ENCODE measurements at regions of chr15 and their contacts with region 1.

Region 1: GRCh38 chr15:63288778-63289378 is 11.5 kb downstream of the APH1B start:
- DNase-seq: peak; percentile 80
- H3K4me3 ChIP-seq: no peak overlapping the region
- H3K27ac ChIP-seq: no peak overlapping the region
- H3K4me1 ChIP-seq: peaks cover 46% of the 10 kb centered on the region
- H3K27me3 ChIP-seq: no peaks in the 10 kb centered on the region
- CTCF ChIP-seq: peak; percentile 34 to 41
- POLR2A ChIP-seq: no peak

Region 2: GRCh38 chr15:62847900-62848489 is 440.9 kb before region 1 on chr15:
- CTCF ChIA-PET with region 1: interaction called, 3 read pairs
- POLR2A ChIA-PET with region 1: no interaction called
- dilution Hi-C with region 1: no loop called
- intact Hi-C with region 1: loop called (anchors 5 kb)
- DNase-seq: peak; percentile 65
- H3K4me3 ChIP-seq: no peak overlapping the region
- H3K27ac ChIP-seq: peak overlapping the region; percentile 44
- H3K4me1 ChIP-seq: peaks cover 39% of the 10 kb centered on the region
- H3K27me3 ChIP-seq: no peaks in the 10 kb centered on the region
- CTCF ChIP-seq: peak; percentile 57 to 73
- POLR2A ChIP-seq: no peak

Region 3: GRCh38 chr15:63093486-63094205 is 195.2 kb before region 1 on chr15:
- CTCF ChIA-PET with region 1: no interaction called
- POLR2A ChIA-PET with region 1: no interaction called
- dilution Hi-C with region 1: no loop called
- intact Hi-C with region 1: loop called (anchors 2 kb)
- DNase-seq: peak; percentile 73
- H3K4me3 ChIP-seq: no peak overlapping the region
- H3K27ac ChIP-seq: no peak overlapping the region
- H3K4me1 ChIP-seq: peaks cover 22% of the 10 kb centered on the region
- H3K27me3 ChIP-seq: no peaks in the 10 kb centered on the region
- CTCF ChIP-seq: peak; percentile 83 to 84
- POLR2A ChIP-seq: no peak

Region 4: GRCh38 chr15:63166219-63166618 is 122.7 kb before region 1 on chr15:
- CTCF ChIA-PET with region 1: interaction called, 11 read pairs
- POLR2A ChIA-PET with region 1: no interaction called
- dilution Hi-C with region 1: no loop called
- intact Hi-C with region 1: no loop called
- DNase-seq: no peak
- H3K4me3 ChIP-seq: no peak overlapping the region
- H3K27ac ChIP-seq: no peak overlapping the region
- H3K4me1 ChIP-seq: no peaks in the 10 kb centered on the region
- H3K27me3 ChIP-seq: no peaks in the 10 kb centered on the region
- CTCF ChIP-seq: no peak
- POLR2A ChIP-seq: no peak

Region 5: GRCh38 chr15:63381301-63382204 is 92.7 kb after region 1 on chr15 and contains the start of gene CA12:
- CTCF ChIA-PET with region 1: interaction called, 5 read pairs
- POLR2A ChIA-PET with region 1: no interaction called
- dilution Hi-C with region 1: no loop called
- intact Hi-C with region 1: loop called (anchors 2 kb)
- DNase-seq: peak; percentile 46
- H3K4me3 ChIP-seq: peak within 1 kb of the TSS; percentile 34 to 54 (median 44)
- H3K27ac ChIP-seq: no peak within 1 kb of the TSS
- H3K4me1 ChIP-seq: peaks cover 8% of the 10 kb centered on the region
- H3K27me3 ChIP-seq: no peaks in the 10 kb centered on the region
- CTCF ChIP-seq: no peak
- POLR2A ChIP-seq: no peak
- total RNA-seq, gene CA12: 1.8 and 5.9 TPM in 2 replicates

Region 6: GRCh38 chr15:63600616-63601025 is 311.7 kb after region 1 on chr15:
- CTCF ChIA-PET with region 1: interaction called, 3 read pairs
- POLR2A ChIA-PET with region 1: no interaction called
- dilution Hi-C with region 1: no loop called
- intact Hi-C with region 1: loop called (anchors 1 kb)
- DNase-seq: peak; percentile 94
- H3K4me3 ChIP-seq: peak overlapping the region; percentile 56 to 82 (median 71)
- H3K27ac ChIP-seq: no peak overlapping the region
- H3K4me1 ChIP-seq: peaks cover 11% of the 10 kb centered on the region
- H3K27me3 ChIP-seq: no peaks in the 10 kb centered on the region
- CTCF ChIP-seq: peak in 1 of 2 donors; percentile 20
- POLR2A ChIP-seq: peak; percentile 95